ENCODE measurements at regions of chr13 and their contacts with region 1.

Region 1: DNA sequence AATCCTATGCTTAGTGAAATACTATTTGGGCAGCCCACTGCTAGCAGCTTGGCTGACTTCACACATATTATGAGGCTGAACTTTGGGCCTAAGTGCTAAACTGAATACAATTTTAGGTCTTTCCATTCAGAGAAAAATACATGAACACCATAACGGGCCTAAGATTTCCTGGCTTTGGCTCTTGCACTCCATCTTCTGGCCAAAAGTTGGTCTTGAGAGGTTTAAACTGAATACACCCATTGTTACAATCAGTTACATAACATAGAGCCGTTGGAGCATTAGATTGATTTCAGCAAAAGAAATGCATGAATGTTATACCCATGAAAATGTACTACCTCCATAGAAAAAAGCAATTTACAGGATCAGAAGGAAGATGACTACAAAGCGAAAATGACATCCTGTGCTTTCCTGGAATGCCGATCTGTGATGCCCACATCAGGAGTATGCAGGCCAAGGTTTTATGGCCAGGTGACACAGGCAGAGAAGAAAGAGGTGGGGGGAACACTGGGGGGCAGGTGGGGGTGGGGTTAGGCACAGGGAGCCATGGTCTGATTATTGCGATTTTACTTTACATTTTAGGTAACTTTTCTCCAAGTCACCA is 11.1 kb upstream of the SHISA2 start:
- DNase-seq: no peak
- H3K4me3 ChIP-seq: no peak overlapping the region
- H3K27ac ChIP-seq: no peak overlapping the region
- H3K4me1 ChIP-seq: no peaks in the 10 kb centered on the region
- H3K27me3 ChIP-seq: peaks cover 0 to 7% (median 0%) of the 10 kb centered on the region in 7 donors
- CTCF ChIP-seq: peak in 9 of 11 experiments; percentile 35 to 56 (median 44)
- POLR2A ChIP-seq: no peak

Region 2: GRCh38 chr13:25819856-25820530 is 243.0 kb before region 1 on chr13:
- intact Hi-C with region 1: loop called (anchors 10 kb)
- DNase-seq: no peak
- H3K4me3 ChIP-seq: no peak overlapping the region
- H3K27ac ChIP-seq: no peak overlapping the region
- H3K4me1 ChIP-seq: no peaks in the 10 kb centered on the region
- H3K27me3 ChIP-seq: no peaks in the 10 kb centered on the region
- CTCF ChIP-seq: no peak
- POLR2A ChIP-seq: no peak

Region 3: DNA sequence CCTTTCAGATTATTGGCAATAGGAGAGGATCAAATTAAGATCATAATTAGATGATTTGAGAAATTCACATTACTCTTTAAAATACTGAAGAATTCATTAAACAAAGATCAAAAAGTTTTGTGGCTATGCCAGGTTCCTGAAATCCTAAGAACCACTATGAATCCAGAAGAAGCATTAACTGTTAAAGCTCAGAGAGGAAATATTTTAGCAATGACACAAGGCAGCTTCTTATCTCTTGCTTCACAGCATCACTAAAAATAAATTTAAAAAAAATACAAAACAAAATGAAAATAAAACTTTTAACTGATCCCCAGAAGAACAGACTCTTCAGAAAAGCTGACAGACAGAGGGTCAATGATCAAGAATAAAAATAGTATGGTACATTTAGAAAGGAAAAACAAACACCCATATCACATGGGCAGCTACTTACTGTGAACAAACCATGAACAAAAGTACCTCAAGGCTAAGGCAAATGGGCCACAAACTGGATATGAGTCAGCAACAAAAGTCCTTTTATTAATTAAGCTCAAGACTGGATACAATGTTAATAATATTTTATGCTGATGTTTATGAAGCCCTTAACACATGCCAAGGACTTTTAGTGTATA is 139.5 kb after region 1 on chr13:
- intact Hi-C with region 1: no loop called
- DNase-seq: no peak
- H3K4me3 ChIP-seq: no peak overlapping the region
- H3K27ac ChIP-seq: no peak overlapping the region
- H3K4me1 ChIP-seq: no peaks in the 10 kb centered on the region
- H3K27me3 ChIP-seq: no peaks in the 10 kb centered on the region
- CTCF ChIP-seq: no peak
- POLR2A ChIP-seq: no peak